Endothelial cell of umbilical vein (primary cell): ENCODE measurements at regions of chr1 and their contacts with region 1.

Region 1: DNA sequence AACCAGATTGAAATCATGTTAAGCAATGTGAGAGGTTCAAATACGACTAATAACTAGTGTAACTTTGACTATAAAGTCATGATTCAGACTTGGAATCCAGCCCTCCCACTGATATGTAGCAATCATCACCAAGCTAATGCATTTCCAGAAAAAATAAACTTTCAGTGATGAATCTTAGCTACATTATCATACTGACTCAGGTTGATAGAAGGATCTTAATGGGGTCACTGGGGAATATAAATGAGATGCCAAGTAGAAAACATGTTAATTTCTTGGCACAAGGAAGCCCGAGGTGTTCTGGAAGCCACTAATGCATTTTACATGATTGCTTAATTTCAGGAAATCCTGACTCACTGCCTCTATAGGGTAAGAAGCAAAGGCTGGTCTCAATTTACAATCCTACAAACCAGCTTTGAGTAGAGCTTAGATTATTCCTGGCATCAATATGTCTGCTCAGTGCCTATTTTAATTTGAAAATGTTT is 67.7 kb downstream of the SELENOF start:
- DNase-seq: peak; percentile 45
- H3K4me3 ChIP-seq: no peak overlapping the region
- H3K27ac ChIP-seq: no peak overlapping the region
- H3K4me1 ChIP-seq: no peaks in the 10 kb centered on the region
- H3K27me3 ChIP-seq: no peaks in the 10 kb centered on the region
- CTCF ChIP-seq: no peak
- POLR2A ChIP-seq: no peak

Region 2: GRCh38 chr1:86470859-86471258 is 375.3 kb before region 1 on chr1:
- CTCF ChIA-PET with region 1: no interaction called
- POLR2A ChIA-PET with region 1: no interaction called
- dilution Hi-C with region 1: no loop called
- intact Hi-C with region 1: no loop called
- DNase-seq: no peak
- H3K4me3 ChIP-seq: no peak overlapping the region
- H3K27ac ChIP-seq: no peak overlapping the region
- H3K4me1 ChIP-seq: peaks cover 3% of the 10 kb centered on the region
- H3K27me3 ChIP-seq: peaks cover 2 to 3% of the 10 kb centered on the region in 2 experiments
- CTCF ChIP-seq: no peak
- POLR2A ChIP-seq: no peak

Region 3: DNA sequence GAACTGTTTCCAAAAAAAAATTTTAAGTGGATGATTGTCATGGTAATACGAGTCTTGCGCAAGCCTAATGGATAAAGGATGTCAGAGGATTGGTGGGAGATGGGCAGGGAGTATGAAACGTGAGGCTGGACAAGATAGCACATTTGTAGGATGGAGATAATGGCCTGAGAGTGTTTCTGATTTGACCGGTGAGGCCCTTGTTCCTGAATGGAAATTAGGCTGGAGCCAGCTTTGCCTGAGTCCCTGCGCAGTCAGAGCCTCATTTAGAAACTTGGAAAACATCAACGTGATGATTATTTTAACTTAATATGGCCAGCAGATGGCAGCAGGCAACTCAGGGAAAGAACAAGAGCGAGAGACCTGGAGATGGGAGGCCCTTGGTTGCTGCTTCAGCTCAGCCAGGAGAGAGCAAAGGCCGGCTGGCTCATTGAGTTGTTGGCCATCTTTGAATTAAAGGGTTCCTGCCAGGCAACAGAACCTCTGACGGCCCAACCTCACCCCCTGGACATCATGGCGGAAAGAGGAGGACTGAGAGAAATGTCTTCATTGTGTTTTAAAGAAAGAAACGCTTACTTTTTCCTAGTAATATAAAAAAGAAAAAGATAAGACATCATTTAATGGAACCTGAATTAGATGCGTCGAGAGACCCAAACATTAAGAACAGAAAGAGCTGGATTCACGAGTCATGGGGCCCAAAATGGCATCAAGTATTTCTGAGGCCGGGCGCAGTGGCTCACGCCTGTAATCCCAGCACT is 12.6 kb before region 1 on chr1:
- CTCF ChIA-PET with region 1: interaction called, 16 read pairs
- POLR2A ChIA-PET with region 1: no interaction called
- dilution Hi-C with region 1: no loop called
- intact Hi-C with region 1: no loop called
- DNase-seq: peak; percentile 75
- H3K4me3 ChIP-seq: no peak overlapping the region
- H3K27ac ChIP-seq: no peak overlapping the region
- H3K4me1 ChIP-seq: no peaks in the 10 kb centered on the region
- H3K27me3 ChIP-seq: no peaks in the 10 kb centered on the region
- CTCF ChIP-seq: peak; percentile 51 to 52
- POLR2A ChIP-seq: no peak